Activated T-helper 1 cell treated with anti-CD3 and anti-CD28 coated beads, Interleukin-12 subunit alpha, Interleukin-12 subunit beta, Interleukin-2, Interleukin-4 antibody, amounts not matched to agents 30 ng/mL and 10 ng/mL and 1 ng/mL, durations not matched to agents 14 hours and 24 hours and 36 hours (primary cell): ENCODE measurements at regions of chr10 and their contacts with region 1.

Region 1: GRCh38 chr10:68901104-68901927 is at the start of gene DDX50:
- DNase-seq: peak; percentile 95
- H3K4me3 Mint-ChIP-seq: peak within 1 kb of the TSS; percentile 92
- H3K27ac Mint-ChIP-seq: peak within 1 kb of the TSS; percentile 97
- H3K4me1 Mint-ChIP-seq: peaks cover 49% of the 10 kb centered on the region
- H3K27me3 Mint-ChIP-seq: no peaks in the 10 kb centered on the region
- total RNA-seq, gene DDX50: 53.0 and 55.0 TPM in 2 replicates

Region 2: DNA sequence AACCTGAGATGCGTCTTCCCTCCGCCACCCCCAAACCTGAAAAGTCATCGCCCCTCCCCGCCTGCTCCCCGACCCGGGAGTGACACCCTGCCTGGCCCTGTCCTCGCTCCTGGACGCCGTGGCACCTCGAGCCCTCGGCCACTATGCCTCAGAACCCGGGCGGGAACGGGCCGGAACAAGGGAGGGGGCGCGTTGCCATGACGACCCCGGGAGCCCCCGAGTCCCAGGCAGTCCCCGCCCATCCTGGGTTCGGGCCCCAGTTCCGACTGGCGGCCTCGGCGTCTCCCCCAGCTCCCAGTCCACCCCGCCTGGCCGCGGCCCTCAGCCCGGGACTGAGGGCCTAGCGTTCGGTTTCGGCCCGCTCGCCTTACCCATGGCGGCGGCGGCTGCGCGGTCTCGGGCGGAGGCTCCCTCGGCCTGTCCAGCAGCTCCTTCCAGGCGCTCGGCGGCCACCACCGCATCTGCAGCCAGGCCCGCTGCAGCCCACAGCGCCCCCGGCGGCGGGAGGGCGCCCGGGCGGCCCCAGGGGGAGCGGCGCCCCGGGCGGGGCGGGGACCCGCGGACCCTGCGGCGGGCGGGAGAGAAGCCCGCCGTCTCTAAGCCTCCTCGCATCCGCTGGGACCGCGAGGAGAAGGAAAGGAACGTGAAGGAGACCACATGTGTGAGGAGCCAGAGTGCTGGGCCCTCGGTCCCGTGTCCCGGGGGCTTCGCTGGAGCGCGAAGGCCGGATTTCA is 494.3 kb before region 1 on chr10 and contains the start of gene RUFY2:
- intact Hi-C with region 1: loop called (anchors 5 kb)
- DNase-seq: peak; percentile 77
- H3K4me3 Mint-ChIP-seq: peak within 1 kb of the TSS; percentile 90
- H3K27ac Mint-ChIP-seq: peak within 1 kb of the TSS; percentile 80
- H3K4me1 Mint-ChIP-seq: peaks cover 13% of the 10 kb centered on the region
- H3K27me3 Mint-ChIP-seq: no peaks in the 10 kb centered on the region
- total RNA-seq, gene RUFY2: 10.4 and 12.3 TPM in 2 replicates

Region 3: GRCh38 chr10:68550747-68551411 is 350.4 kb before region 1 on chr10:
- intact Hi-C with region 1: loop called (anchors 1 kb)
- DNase-seq: peak; percentile 31
- H3K4me3 Mint-ChIP-seq: no peak overlapping the region
- H3K27ac Mint-ChIP-seq: no peak overlapping the region
- H3K4me1 Mint-ChIP-seq: no peaks in the 10 kb centered on the region
- H3K27me3 Mint-ChIP-seq: peaks cover 5% of the 10 kb centered on the region

Region 4: DNA sequence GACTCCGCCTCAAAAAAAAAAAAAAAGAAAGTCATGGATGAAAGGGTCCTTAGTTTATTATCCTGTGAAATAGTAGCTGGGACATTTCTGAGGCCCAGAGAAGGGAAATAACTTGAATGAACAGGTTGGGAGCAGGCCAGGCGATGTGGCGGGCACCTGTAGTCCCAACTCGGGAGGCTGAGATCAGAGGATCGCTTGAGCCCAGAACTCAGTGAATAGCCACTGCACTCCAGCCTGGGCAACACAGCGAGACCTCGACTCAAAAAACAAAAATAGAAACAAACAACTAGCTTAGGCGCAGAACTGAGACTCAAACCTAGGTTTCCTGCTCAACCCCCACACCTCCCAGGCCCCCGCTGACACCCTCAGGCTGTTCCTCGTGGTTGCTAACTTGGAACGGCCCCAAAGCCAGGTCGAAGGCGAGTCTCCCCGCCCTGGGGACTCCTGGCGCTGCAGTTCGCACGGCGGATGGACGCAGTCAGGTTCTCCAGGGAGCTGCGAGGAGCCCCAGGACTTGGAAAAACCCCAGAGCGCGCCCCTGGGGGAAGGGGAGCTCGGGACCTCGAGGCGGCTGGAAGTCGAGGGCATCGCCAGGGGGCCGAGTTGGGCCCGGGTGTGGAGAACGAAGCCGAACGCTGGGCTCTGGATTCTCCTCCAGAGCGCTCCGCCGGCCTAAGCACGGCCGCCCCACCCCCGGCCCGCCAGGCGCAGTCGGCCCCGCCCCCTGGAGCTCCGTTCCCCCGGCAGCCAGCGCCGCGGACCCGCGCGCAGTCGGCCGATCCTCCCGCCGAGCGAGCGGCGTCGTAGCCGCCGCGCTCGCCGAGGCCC is 74.3 kb before region 1 on chr10 and contains the start of gene STOX1:
- intact Hi-C with region 1: loop called (anchors 1 kb)
- DNase-seq: peak; percentile 40
- H3K4me3 Mint-ChIP-seq: peak within 1 kb of the TSS; percentile 80
- H3K27ac Mint-ChIP-seq: no peak within 1 kb of the TSS
- H3K4me1 Mint-ChIP-seq: no peaks in the 10 kb centered on the region
- H3K27me3 Mint-ChIP-seq: peaks cover 33% of the 10 kb centered on the region
- total RNA-seq, gene STOX1: 0.32 and 1.1 TPM in 2 replicates

Region 5: DNA sequence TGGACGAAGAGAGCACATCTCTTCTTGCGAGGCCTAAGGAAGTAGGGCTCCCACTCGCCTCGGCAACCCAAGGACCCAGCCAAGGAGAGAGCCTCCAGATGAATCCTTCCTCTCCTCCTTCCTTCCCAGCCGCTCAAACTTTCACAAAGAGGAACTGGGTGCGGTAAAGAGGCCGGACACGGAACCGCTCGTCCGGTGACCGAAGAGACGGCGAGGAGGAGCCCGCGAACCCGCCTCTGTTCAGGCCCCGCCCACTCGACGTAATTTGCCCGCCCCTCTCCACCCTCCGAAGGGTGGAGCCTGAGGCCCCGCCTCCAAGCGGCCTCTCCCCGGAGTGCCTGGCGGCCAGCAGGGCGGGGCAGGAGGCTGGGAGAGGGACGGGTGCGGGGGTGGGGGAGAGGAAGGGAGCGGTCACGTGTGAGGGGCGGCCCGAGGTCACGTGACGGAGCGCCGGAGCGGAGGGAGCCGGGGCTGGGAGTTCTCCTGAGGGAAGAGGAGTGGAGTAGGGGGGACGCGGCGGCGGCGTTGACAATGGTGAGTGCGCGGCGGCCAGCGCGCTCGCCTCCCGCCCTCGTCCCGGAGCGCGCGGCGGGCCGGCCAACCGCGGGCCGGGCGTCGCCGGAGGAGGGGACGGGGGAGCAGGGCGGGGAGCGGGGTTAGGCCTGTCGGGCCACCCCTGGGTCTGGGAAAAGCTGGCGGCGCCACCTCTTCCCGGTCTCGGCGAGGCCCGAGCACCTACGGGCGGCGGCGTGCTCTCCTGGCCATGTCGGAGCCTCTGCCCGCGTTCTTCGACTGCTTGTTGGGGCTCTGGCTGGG is 222.6 kb after region 1 on chr10 and contains the start of gene VPS26A:
- intact Hi-C with region 1: loop called (anchors 2 kb)
- DNase-seq: peak; percentile 99
- H3K4me3 Mint-ChIP-seq: peak within 1 kb of the TSS; percentile 87
- H3K27ac Mint-ChIP-seq: peak within 1 kb of the TSS; percentile 88
- H3K4me1 Mint-ChIP-seq: peaks cover 21% of the 10 kb centered on the region
- H3K27me3 Mint-ChIP-seq: no peaks in the 10 kb centered on the region
- total RNA-seq, gene VPS26A: 24.7 and 24.8 TPM in 2 replicates

Region 6: GRCh38 chr10:69262292-69262751 is 361.0 kb after region 1 on chr10:
- intact Hi-C with region 1: no loop called
- DNase-seq: no peak
- H3K4me3 Mint-ChIP-seq: peak overlapping the region; percentile 3
- H3K27ac Mint-ChIP-seq: peak overlapping the region; percentile 32
- H3K4me1 Mint-ChIP-seq: peaks cover 22% of the 10 kb centered on the region
- H3K27me3 Mint-ChIP-seq: peaks cover 7% of the 10 kb centered on the region